ENCODE measurements at regions of chr10 and their contacts with region 1.

Region 1: DNA sequence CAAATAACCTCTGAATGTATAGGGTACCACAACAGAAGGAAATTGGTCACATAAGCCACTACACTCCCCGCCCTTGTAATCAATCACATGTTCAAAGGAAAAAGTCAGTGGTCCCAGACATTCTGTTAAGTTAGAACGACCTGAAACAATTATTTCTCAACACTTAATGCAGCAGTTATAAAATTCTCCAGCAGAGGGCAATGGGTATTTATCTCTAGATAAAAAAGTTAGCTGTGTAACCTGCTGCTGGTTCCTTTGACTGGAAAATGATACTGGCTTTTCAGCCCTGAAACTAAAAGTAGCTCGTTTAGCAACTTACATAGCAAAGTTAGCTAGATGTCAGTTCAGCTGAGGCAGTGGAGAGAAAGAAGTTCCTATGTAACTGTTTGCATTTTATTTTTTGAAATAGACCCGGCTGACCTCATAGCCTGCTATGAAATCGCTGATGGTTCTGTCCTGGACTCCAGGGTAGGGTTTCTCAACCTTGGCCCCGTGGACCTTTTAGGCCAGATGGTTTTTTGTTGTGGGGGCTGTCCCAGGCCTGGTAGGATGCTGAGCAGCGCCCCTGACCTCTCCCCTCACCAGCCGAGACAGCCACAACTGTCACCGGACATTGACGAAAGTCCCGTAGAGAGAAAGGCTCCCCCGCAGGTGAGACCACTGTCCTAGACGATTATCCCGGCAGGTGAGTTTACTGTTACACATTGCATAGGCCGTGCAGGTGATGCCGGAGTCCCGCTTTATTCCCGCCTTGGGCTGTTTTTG is 40.2 kb upstream of the PROSER2 start:
- DNase-seq: no peak

Region 2: DNA sequence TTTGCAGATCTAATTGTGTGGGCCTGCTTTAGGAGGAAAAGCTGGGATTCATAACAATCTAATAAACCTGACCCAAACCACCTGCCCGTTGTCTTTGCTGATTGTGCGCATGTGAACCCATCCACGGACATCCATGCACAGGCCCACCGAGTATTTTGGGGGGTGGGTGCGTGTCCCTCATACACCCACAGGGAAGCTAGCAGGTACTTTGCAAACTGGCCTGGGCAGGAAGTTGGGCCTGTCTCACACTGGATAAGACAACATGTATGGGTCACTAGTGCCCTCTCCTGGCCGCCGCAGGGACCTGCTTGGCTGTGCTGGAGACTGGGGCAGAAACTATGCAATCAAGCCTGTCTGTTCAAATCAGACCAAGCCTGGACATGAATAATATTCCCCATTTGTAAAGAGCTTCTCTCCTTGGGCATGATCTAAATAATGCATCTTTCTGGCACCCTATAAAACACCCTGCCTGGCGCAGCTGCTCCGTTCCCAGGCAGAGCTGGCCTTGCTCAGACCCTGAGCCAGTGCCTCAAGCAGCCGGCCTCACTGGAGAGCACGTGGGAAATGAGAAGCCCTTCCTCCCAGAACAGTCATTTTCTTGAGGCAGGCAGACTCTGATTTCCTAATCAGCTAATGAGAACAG is 25.0 kb before region 1 on chr10:
- intact Hi-C with region 1: loop called in 1 of 2 experiments (anchors 1 kb)
- DNase-seq: peak; percentile 96

Region 3: GRCh38 chr10:11986593-11987216 is 203.7 kb after region 1 on chr10:
- intact Hi-C with region 1: loop called in 1 of 2 experiments (anchors 10 kb)
- DNase-seq: peak; percentile 90